Stomach (tissue), 19 donors: ENCODE measurements at regions of chr15 and their contacts with region 1.

Region 1: DNA sequence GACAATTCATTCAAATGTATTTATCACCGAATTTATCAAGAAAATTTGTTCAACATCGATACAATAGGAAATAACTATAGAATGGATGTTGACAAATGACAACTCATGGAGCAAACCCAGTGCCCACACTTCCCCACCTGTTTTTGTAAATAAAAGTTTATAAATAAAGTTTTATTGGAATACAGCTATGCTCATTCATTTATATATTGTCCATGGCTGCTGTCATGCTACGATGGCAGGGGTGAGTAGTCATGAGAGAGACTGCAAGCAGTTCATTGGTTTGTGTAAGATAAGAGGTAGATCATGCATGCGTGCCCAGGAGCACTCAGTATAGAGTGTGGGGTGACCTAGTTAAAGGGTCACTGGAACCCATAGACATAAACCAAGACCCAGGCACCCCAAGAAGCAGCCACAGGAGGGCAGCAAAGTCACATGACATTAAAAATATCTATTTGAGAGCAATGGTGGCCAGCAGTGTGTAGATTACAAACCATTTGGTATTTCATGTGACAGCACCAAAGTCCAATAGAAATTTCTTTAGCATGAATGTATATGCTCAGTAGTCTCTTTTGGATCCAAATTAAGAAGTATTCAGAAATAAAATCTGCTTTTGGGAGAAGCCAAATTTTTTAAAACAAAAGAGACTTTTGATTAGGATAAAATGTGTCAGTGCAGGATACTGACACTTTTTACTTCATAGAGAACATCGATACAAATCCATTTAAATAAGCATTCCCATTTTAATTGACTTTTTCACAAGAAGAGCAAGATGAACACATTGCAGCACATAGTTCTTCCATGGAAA is 794.8 kb downstream of the MCTP2 start:
- DNase-seq: peak; percentile 60 to 64
- H3K4me3 ChIP-seq: no peak overlapping the region
- H3K27ac ChIP-seq: no peak overlapping the region
- H3K4me1 ChIP-seq: no peaks in the 10 kb centered on the region
- H3K27me3 ChIP-seq: no peaks in the 10 kb centered on the region
- CTCF ChIP-seq: peak in 5 of 7 experiments; percentile 15 to 49 (median 37)
- EP300 ChIP-seq: no peak
- POLR2A ChIP-seq: no peak

Region 2: GRCh38 chr15:94666561-94666960 is 359.6 kb before region 1 on chr15:
- intact Hi-C with region 1: loop called (anchors 10 kb)
- DNase-seq: no peak
- H3K4me3 ChIP-seq: no peak overlapping the region
- H3K27ac ChIP-seq: no peak overlapping the region
- H3K4me1 ChIP-seq: peaks cover 0 to 15% (median 5%) of the 10 kb centered on the region in 4 donors
- H3K27me3 ChIP-seq: no peaks in the 10 kb centered on the region
- CTCF ChIP-seq: no peak
- EP300 ChIP-seq: no peak
- POLR2A ChIP-seq: no peak

Region 3: GRCh38 chr15:95152741-95153140 is 126.6 kb after region 1 on chr15:
- intact Hi-C with region 1: no loop called
- DNase-seq: no peak
- H3K4me3 ChIP-seq: no peak overlapping the region
- H3K27ac ChIP-seq: no peak overlapping the region
- H3K4me1 ChIP-seq: no peaks in the 10 kb centered on the region
- H3K27me3 ChIP-seq: no peaks in the 10 kb centered on the region
- CTCF ChIP-seq: no peak
- EP300 ChIP-seq: no peak
- POLR2A ChIP-seq: no peak